IMR-90 (cell line): ENCODE measurements at regions of chr9 and their contacts with region 1.

Region 1: GRCh38 chr9:15606643-15607472 is 54.0 kb downstream of the CCDC171 start:
- DNase-seq: peak; percentile 35
- ATAC-seq: peak; percentile 64; the same call in 1 of the 2 replicates
- H3K4me3 ChIP-seq: no peak overlapping the region
- H3K27ac ChIP-seq: no peak overlapping the region
- H3K4me1 ChIP-seq: no peaks in the 10 kb centered on the region
- H3K27me3 ChIP-seq: no peaks in the 10 kb centered on the region
- CTCF ChIP-seq: peak; percentile 68
- POLR2A ChIP-seq: no peak
- RAD21 ChIP-seq: peak; percentile 58

Region 2: DNA sequence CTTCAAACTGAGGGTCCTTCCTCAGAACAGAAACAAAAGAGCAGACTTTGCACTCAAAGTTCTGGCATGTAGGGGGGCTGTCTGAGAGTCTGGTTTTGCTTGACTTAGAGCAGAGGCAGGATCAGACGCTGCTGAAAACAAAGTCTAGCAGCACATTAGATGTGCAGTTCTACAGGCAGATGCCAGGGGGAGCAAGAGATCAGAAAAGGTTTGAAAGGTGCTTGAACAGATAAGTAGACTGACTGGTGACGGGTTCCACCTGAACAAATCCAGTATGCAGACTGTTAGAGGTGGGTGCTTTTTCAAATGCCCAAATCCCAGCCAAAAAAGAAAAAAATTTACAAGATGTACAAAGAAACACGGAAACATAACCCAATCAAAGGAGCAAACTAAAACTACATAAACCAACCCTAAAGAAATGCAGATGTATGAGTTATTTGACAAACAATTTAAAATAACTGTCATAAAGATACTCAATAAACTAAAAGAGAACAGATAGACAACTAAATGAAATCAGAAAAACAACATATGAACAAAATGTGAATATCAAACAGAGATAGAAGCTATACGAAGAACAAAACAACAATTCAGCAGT is 501.9 kb before region 1 on chr9:
- CTCF ChIA-PET with region 1: no interaction called
- POLR2A ChIA-PET with region 1: no interaction called
- dilution Hi-C with region 1: no loop called
- in situ Hi-C with region 1: no loop called
- intact Hi-C with region 1: loop called (anchors 10 kb)
- DNase-seq: peak; percentile 46
- ATAC-seq: peak; percentile 85
- H3K4me3 ChIP-seq: no peak overlapping the region
- H3K27ac ChIP-seq: no peak overlapping the region
- H3K4me1 ChIP-seq: peaks cover 2% of the 10 kb centered on the region; the same call in 1 of the 2 replicates
- H3K27me3 ChIP-seq: no peaks in the 10 kb centered on the region; the same call in 1 of the 2 replicates
- CTCF ChIP-seq: peak; percentile 70
- POLR2A ChIP-seq: no peak
- RAD21 ChIP-seq: peak; percentile 66

Region 3: GRCh38 chr9:15277400-15278090 is 329.3 kb before region 1 on chr9:
- CTCF ChIA-PET with region 1: no interaction called
- POLR2A ChIA-PET with region 1: no interaction called
- dilution Hi-C with region 1: no loop called
- in situ Hi-C with region 1: no loop called
- intact Hi-C with region 1: loop called (anchors 5 kb)
- DNase-seq: peak; percentile 25
- ATAC-seq: peak; percentile 44; the same call in 1 of the 2 replicates
- H3K4me3 ChIP-seq: no peak overlapping the region
- H3K27ac ChIP-seq: no peak overlapping the region
- H3K4me1 ChIP-seq: no peaks in the 10 kb centered on the region
- H3K27me3 ChIP-seq: no peaks in the 10 kb centered on the region
- CTCF ChIP-seq: peak; percentile 51
- POLR2A ChIP-seq: no peak
- RAD21 ChIP-seq: peak; percentile 50

Region 4: DNA sequence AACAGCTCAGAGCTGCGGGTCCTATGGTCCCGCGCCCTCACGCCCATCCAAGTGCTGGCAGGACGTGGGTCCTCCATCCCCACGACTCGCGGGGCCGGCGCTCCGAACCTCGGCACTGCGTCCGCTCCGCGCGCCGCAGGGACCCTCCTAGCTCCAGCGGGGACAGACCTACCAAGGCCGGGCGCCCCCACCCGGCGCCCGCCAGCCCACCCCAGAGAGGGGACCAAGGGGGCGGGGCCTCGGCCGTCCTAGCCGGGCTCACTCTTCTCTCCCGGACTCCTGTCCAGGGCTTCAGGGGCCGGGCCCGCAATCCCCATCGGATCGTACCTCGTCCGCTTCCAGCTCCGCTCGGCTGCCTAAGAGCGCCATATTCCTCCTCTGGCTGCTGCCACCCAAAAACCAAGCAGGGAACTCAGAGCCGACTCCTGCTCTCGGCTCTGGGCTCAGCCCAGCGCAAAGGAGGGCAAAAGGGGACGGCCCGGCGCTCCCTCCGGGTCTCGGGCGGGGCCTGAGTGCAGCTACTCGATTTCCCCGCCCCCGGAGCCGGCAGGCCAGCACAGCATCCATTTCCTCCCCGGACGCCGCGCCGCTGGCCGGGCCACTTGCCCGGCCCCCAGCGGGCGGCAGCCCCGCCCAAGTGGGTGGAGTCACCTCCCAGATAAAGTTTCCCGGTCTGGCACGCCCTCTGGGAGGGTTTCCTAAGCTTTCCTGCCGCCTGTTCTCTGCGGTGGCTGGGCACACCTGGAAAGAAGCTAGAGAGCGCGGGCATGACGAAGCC is 299.9 kb before region 1 on chr9 and contains the start of gene TTC39B:
- CTCF ChIA-PET with region 1: no interaction called
- POLR2A ChIA-PET with region 1: no interaction called
- dilution Hi-C with region 1: no loop called
- in situ Hi-C with region 1: no loop called
- intact Hi-C with region 1: no loop called
- DNase-seq: peak; percentile 87
- ATAC-seq: peak; percentile 94
- H3K4me3 ChIP-seq: peak within 1 kb of the TSS; percentile 95
- H3K27ac ChIP-seq: peak within 1 kb of the TSS; percentile 96
- H3K4me1 ChIP-seq: peaks cover 5% of the 10 kb centered on the region
- H3K27me3 ChIP-seq: no peaks in the 10 kb centered on the region
- CTCF ChIP-seq: 0 out of 2 replicates have a peak, but pooled peaks have one; percentile 16
- POLR2A ChIP-seq: peak; percentile 57; the same call in 1 of the 2 replicates
- RAD21 ChIP-seq: no peak
- total RNA-seq, gene TTC39B: 9.7 and 12.2 TPM in 2 replicates

Region 5: DNA sequence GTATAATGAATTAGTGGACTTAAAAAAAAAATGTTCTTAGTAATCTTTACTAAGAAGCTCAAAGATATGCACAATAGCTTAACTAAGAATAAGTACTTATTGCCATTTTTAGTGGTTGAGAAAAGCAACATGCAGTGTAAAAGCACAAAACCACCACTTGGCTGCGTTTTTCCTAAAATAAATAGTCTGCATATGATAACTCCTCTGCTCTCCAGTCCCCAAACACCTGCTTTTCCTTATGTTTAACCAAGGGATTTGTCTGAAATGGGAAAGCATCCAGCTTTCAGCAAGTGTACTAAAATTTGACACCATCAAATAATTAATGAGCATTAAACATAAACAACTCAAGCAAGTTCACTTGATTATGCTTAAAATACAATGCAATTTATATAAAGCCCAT is 137.5 kb before region 1 on chr9:
- CTCF ChIA-PET with region 1: interaction called, 3 read pairs
- POLR2A ChIA-PET with region 1: no interaction called
- dilution Hi-C with region 1: no loop called
- in situ Hi-C with region 1: no loop called
- intact Hi-C with region 1: loop called (anchors 5 kb)
- DNase-seq: peak; percentile 46
- ATAC-seq: 0 out of 2 replicates have a peak, but pooled peaks have one; percentile 23
- H3K4me3 ChIP-seq: no peak overlapping the region
- H3K27ac ChIP-seq: no peak overlapping the region
- H3K4me1 ChIP-seq: 0 out of 2 replicates have a peak, but pooled peaks cover 1% of the 10 kb centered on the region
- H3K27me3 ChIP-seq: no peaks in the 10 kb centered on the region
- CTCF ChIP-seq: no peak
- POLR2A ChIP-seq: no peak
- RAD21 ChIP-seq: no peak

Region 6: GRCh38 chr9:15510789-15511575 is 95.9 kb before region 1 on chr9 and contains the start of gene PSIP1:
- CTCF ChIA-PET with region 1: no interaction called
- POLR2A ChIA-PET with region 1: interaction called, 3 read pairs
- dilution Hi-C with region 1: no loop called
- in situ Hi-C with region 1: no loop called
- intact Hi-C with region 1: loop called (anchors 5 kb)
- DNase-seq: peak; percentile 75
- ATAC-seq: peak; percentile 90
- H3K4me3 ChIP-seq: peak within 1 kb of the TSS; percentile 95
- H3K27ac ChIP-seq: peak within 1 kb of the TSS; percentile 90
- H3K4me1 ChIP-seq: peaks cover 2% of the 10 kb centered on the region; the same call in 1 of the 2 replicates
- H3K27me3 ChIP-seq: no peaks in the 10 kb centered on the region; the same call in 1 of the 2 replicates
- CTCF ChIP-seq: no peak
- POLR2A ChIP-seq: peak; percentile 51; the same call in 1 of the 2 replicates
- RAD21 ChIP-seq: no peak
- total RNA-seq, gene PSIP1: 27.2 and 30.0 TPM in 2 replicates